Posterior vena cava (tissue), 2 donors: ENCODE measurements at regions of chr9 and their contacts with region 1.

Region 1: GRCh38 chr9:19048966-19049916 is at the start of gene RRAGA:
- DNase-seq: peak; percentile 99
- total RNA-seq, gene RRAGA: 88.3 to 88.7 TPM

Region 2: DNA sequence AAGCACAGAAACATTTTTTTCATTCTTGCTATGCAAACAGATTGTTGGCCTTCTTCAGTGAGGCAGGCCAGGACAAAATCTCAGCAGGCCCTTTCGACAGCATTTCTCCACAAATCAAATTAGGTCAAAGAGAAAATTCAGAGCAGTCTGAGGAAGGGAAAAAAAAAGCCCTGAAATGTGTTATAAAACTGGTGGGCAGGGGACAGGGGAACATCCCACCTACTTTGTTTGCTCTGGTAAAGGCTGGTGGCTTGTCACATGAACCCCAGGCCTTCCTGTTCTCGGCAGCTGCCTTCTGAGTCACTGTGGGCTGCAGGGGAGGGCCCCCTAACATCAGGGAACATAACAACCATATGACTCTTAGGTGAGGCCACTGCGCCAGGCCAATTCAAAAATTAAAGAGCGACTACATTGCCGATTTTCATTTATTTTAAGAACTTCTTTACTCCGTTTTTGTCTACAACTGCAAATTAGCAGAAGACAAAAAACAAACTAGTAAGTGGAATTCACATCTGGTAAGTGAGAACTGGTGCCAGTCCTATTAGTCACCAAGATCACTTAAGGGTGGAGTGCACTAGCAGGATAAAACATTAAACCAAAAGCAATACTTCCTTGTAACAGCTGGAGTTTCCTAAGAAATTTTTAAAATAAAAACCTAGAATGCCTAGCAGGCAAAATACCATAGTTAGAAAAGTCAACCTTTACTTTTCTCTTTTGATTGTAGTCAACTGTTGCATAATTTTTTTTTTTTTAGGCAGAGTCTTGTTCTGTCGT is 135.1 kb after region 1 on chr9:
- intact Hi-C with region 1: loop called in 1 of 2 experiments (anchors 10 kb)
- DNase-seq: peak; percentile 93